Activated B cell treated with CpG ODN at 0.5 μM for 24 hours (primary cell): ENCODE measurements at regions of chr14 and their contacts with region 1.

Region 1: GRCh38 chr14:24114536-24115450 is at the starts of genes DCAF11 and NRL:
- DNase-seq: peak; percentile 97
- ATAC-seq: peak; percentile 83
- H3K4me3 Mint-ChIP-seq: peak within 1 kb of the TSS; percentile 99
- H3K27ac Mint-ChIP-seq: peak within 1 kb of the TSS; percentile 100
- H3K4me1 Mint-ChIP-seq: peaks cover 27% of the 10 kb centered on the region
- H3K27me3 Mint-ChIP-seq: no peaks in the 10 kb centered on the region
- CTCF ChIP-seq: no peak
- total RNA-seq, gene DCAF11: 84.3 and 86.5 TPM in 2 replicates
- total RNA-seq, gene NRL: 5.4 and 5.5 TPM in 2 replicates

Region 2: GRCh38 chr14:24040692-24041091 is 74.1 kb before region 1 on chr14:
- CTCF ChIA-PET with region 1: no interaction called
- POLR2A ChIA-PET with region 1: no interaction called
- intact Hi-C with region 1: no loop called
- DNase-seq: no peak
- ATAC-seq: no peak
- H3K4me3 Mint-ChIP-seq: no peak overlapping the region
- H3K27ac Mint-ChIP-seq: no peak overlapping the region
- H3K4me1 Mint-ChIP-seq: peaks cover 7% of the 10 kb centered on the region
- H3K27me3 Mint-ChIP-seq: no peaks in the 10 kb centered on the region
- CTCF ChIP-seq: no peak

Region 3: DNA sequence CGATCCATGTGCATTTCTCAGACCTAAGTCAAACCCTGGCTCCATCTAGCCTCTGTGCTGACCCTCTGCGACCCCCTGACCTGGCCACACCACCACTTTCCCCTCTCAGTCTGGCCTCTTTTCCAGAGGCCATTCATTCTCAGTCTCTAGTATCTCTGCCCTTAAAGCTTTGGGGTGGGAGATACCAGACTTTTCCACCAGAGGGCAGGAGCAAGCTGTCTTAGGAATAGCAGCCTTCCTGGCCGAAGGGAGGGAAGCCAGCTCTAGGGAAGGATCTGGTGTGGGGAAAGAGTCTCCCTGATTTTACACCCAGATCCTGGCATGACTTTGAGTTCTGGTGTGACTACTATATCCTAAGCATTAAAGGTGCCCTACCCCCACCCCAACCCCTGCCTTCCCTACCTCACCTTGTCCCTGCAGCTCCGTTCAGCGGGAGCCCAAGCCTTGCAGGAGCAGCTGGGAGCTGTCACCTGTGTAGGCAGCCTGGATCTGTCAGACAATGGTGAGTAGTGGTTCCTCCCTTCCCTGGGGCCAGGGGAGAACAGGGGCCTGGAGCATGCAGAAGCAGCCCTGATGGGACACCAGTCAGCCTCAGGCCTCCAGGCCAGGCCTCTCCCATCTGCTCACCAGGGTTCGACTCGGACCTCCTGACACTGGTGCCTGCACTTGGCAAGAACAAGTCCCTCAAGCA is 56.4 kb before region 1 on chr14:
- CTCF ChIA-PET with region 1: interaction called, 13 read pairs
- POLR2A ChIA-PET with region 1: interaction called, 10 read pairs
- intact Hi-C with region 1: no loop called
- DNase-seq: no peak
- ATAC-seq: peak; percentile 84
- H3K4me3 Mint-ChIP-seq: no peak overlapping the region
- H3K27ac Mint-ChIP-seq: no peak overlapping the region
- H3K4me1 Mint-ChIP-seq: peaks cover 2% of the 10 kb centered on the region
- H3K27me3 Mint-ChIP-seq: no peaks in the 10 kb centered on the region
- CTCF ChIP-seq: no peak

Region 4: DNA sequence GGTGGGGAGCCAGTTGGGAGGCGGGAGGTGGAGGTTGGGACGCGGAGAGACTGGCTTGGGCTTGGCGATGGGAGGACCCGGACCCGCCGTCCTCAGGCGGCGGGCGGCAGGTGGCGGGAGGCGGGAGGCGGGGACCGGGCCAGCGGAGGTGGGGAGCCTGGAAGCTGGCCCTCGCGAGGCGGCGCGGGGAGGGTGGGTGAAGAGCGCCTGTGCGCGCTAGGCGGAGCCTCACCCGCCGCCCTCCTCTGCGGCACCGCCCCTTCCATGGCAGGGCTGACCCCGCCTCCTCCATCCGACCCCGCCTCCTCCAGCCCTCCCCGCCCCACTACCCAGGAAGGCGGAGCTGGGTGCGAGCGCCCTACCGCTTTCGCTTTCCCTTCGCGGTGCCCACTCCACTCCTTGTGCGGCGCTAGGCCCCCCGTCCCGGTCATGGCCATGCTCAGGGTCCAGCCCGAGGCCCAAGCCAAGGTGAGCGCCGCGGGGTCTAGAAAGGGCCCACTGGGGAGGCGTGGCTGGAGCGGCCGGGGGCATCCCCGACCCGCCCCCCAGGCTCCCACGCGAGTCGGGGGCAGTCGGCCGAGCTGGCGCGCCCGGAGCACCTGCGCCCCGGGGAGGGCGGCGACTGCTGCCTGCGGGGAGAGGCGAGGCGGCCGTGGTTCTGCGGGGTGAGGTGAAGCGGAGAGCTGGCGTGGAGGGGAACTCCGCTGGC is 21.2 kb after region 1 on chr14 and contains the start of gene PSME1:
- CTCF ChIA-PET with region 1: interaction called, 12 read pairs
- POLR2A ChIA-PET with region 1: interaction called, 239 read pairs
- intact Hi-C with region 1: loop called (anchors 1 kb)
- DNase-seq: peak; percentile 94
- ATAC-seq: peak; percentile 97
- H3K4me3 Mint-ChIP-seq: peak within 1 kb of the TSS; percentile 91
- H3K27ac Mint-ChIP-seq: peak within 1 kb of the TSS; percentile 90
- H3K4me1 Mint-ChIP-seq: peaks cover 57% of the 10 kb centered on the region
- H3K27me3 Mint-ChIP-seq: no peaks in the 10 kb centered on the region
- CTCF ChIP-seq: no peak
- total RNA-seq, gene PSME1: 406 and 449 TPM in 2 replicates

Region 5: GRCh38 chr14:24155100-24155499 is 40.3 kb after region 1 on chr14:
- CTCF ChIA-PET with region 1: interaction called, 45 read pairs
- POLR2A ChIA-PET with region 1: interaction called, 93 read pairs
- intact Hi-C with region 1: no loop called
- DNase-seq: no peak
- ATAC-seq: no peak
- H3K4me3 Mint-ChIP-seq: no peak overlapping the region
- H3K27ac Mint-ChIP-seq: no peak overlapping the region
- H3K4me1 Mint-ChIP-seq: peaks cover 2% of the 10 kb centered on the region
- H3K27me3 Mint-ChIP-seq: no peaks in the 10 kb centered on the region
- CTCF ChIP-seq: no peak

Region 6: GRCh38 chr14:24195191-24196070 is 80.6 kb after region 1 on chr14 and contains the start of gene TM9SF1:
- CTCF ChIA-PET with region 1: no interaction called
- POLR2A ChIA-PET with region 1: interaction called, 20 read pairs
- intact Hi-C with region 1: no loop called
- DNase-seq: peak; percentile 91
- ATAC-seq: peak; percentile 83
- H3K4me3 Mint-ChIP-seq: peak within 1 kb of the TSS; percentile 96
- H3K27ac Mint-ChIP-seq: peak within 1 kb of the TSS; percentile 97
- H3K4me1 Mint-ChIP-seq: peaks cover 48% of the 10 kb centered on the region
- H3K27me3 Mint-ChIP-seq: no peaks in the 10 kb centered on the region
- CTCF ChIP-seq: no peak
- total RNA-seq, gene TM9SF1: 24.5 and 26.3 TPM in 2 replicates

Region 7: GRCh38 chr14:24271134-24271833 is 156.5 kb after region 1 on chr14 and contains the start of gene RABGGTA:
- CTCF ChIA-PET with region 1: no interaction called
- POLR2A ChIA-PET with region 1: interaction called, 10 read pairs
- intact Hi-C with region 1: loop called (anchors 1 kb)
- DNase-seq: peak; percentile 88
- ATAC-seq: peak; percentile 83
- H3K4me3 Mint-ChIP-seq: peak within 1 kb of the TSS; percentile 90
- H3K27ac Mint-ChIP-seq: peak within 1 kb of the TSS; percentile 96
- H3K4me1 Mint-ChIP-seq: peaks cover 57% of the 10 kb centered on the region
- H3K27me3 Mint-ChIP-seq: no peaks in the 10 kb centered on the region
- CTCF ChIP-seq: no peak
- total RNA-seq, gene RABGGTA: 53.6 and 70.5 TPM in 2 replicates

Region 8: DNA sequence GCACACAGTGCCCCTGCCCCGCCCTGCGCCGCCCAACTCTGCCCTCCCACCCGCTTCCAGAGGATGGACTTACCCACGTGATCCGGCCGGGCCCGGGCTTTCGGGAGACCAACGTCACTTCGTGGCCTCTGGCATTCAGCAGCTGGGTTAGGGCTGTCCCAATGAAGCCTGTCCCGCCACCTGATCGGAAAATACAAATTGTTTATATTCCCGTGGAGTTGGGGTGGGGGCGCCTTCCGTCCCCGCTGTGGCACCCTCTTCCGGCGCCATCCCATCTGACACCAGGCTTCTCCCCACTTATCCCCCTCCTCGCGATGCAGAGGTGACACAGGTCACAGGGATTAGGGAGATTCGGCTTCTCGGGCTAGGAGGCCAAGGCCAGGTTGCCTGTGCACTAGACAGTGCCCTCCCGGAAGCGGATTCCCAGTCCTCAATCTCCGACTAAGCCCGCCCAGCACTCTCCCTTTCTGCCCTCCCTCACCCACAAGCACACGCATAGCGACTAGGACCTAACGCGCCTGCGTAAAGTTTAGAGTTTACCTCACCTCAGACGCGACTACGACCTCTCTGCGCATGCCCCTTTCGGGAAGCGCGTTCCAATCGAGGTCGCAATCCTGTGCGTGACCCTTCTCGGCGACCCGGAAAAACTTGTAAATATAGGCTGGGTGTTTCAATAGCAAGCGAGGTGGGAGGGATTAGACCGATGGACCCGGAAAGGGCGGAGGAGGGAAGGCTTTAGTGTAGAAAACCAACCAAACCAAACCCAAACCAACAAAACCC is 327.7 kb after region 1 on chr14 and contains the start of gene SDR39U1:
- CTCF ChIA-PET with region 1: no interaction called
- POLR2A ChIA-PET with region 1: no interaction called
- intact Hi-C with region 1: loop called (anchors 1 kb)
- DNase-seq: peak; percentile 81
- ATAC-seq: peak; percentile 89
- H3K4me3 Mint-ChIP-seq: peak within 1 kb of the TSS; percentile 98
- H3K27ac Mint-ChIP-seq: peak within 1 kb of the TSS; percentile 98
- H3K4me1 Mint-ChIP-seq: peaks cover 48% of the 10 kb centered on the region
- H3K27me3 Mint-ChIP-seq: no peaks in the 10 kb centered on the region
- CTCF ChIP-seq: no peak
- total RNA-seq, gene SDR39U1: 70.6 and 80.0 TPM in 2 replicates